Body of pancreas (tissue), 4 donors: ENCODE measurements at regions of chr20 and their contacts with region 1.

Region 1: DNA sequence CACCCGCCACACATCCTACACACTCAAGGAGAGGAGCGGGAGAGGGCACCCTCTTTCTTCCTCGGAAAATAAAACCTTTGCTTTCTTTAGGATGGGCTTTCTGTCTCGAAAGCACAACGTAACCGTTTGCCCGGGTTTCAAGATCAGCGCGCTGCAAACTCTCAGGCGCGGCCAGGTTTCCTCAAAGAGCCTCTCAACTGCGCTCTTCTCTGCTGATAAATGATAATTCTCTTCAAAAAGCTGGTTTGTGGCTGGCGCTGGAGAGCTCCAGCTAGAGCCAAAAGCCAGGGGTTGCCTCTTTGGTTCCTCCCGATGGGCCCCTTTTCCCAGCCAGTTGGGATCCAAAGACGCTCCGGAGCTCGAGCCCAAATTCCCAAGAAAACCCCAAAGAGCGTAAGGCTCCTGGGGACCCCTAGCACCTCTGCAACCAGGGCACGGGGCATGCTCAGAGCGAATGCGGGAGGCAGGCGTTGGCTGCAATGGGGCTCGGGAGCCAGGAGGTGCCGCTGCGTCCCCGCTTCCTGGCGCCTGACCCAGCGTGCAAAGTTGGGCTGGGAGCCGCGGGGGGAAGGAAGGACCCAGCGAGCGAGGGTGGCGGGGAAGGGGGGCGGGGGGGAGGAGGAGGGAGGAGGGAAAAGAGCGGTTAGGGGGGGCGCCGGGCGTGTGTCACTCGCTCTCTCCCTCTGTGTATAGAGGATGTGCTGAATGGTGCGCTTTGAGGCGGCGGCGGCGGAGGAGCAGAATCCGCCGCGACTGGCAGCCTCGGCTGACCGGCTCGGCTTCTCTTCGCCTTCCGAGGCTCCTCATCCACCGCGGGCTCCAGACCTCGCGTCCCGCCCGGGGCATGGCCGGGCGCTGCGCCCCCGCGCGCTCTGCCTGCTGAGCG is at the start of gene PLCB1:
- DNase-seq: peak; percentile 88 to 91 (median 88)
- ATAC-seq: peak; percentile 90
- H3K4me3 ChIP-seq: peak within 1 kb of the TSS; percentile 58 to 73
- H3K27ac ChIP-seq: peak within 1 kb of the TSS; percentile 74 to 87 (median 78)
- H3K4me1 ChIP-seq: peaks cover 5% of the 10 kb centered on the region
- H3K27me3 ChIP-seq: no peaks in the 10 kb centered on the region
- CTCF ChIP-seq: peak; percentile 83 to 96 (median 93)
- POLR2A ChIP-seq: no peak
- total RNA-seq, gene PLCB1: 32.9 to 46.1 TPM

Region 2: DNA sequence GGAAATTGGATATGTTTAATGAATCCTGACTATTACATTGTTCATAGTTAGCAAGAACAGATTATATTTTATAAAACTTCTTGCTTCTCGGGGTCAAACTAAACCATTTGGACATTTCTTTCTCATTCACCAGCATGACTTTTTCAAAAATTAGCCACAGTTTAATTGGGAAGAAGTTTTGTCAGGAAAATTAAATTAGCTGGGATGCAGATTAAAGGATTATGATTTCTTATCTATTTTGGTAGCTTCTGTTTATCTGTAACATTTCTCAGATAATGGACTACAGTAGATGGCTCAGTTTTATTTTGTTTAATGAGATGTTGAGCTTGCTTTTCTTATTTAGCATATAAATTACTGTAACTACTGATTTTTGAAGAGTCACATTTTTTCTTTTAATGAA is 85.9 kb before region 1 on chr20:
- intact Hi-C with region 1: no loop called
- DNase-seq: no peak
- ATAC-seq: no peak
- H3K4me3 ChIP-seq: no peak overlapping the region
- H3K27ac ChIP-seq: no peak overlapping the region
- H3K4me1 ChIP-seq: no peaks in the 10 kb centered on the region
- H3K27me3 ChIP-seq: no peaks in the 10 kb centered on the region
- CTCF ChIP-seq: no peak
- POLR2A ChIP-seq: no peak

Region 3: DNA sequence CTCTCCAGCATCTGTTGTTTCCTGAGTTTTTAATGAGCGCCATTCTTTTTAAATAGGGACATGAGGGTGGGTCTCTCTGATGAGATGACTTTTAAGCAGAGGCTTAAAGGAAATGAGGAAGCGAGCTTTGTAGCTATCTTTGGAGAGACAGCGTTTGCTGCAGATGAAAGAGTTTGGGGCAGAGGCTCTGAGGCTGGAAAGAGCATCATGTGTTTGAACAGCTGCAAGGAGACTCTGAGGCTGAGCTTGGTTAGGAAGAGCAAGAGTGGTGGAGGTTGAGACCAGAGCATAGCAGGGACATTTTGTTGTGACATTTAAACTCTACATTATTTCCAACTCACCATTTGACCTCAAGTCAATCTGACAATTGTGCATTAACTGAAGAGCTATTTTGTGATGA is 74.0 kb before region 1 on chr20:
- intact Hi-C with region 1: no loop called
- DNase-seq: no peak
- ATAC-seq: no peak
- H3K4me3 ChIP-seq: no peak overlapping the region
- H3K27ac ChIP-seq: no peak overlapping the region
- H3K4me1 ChIP-seq: no peaks in the 10 kb centered on the region
- H3K27me3 ChIP-seq: no peaks in the 10 kb centered on the region
- CTCF ChIP-seq: no peak
- POLR2A ChIP-seq: no peak

Region 4: DNA sequence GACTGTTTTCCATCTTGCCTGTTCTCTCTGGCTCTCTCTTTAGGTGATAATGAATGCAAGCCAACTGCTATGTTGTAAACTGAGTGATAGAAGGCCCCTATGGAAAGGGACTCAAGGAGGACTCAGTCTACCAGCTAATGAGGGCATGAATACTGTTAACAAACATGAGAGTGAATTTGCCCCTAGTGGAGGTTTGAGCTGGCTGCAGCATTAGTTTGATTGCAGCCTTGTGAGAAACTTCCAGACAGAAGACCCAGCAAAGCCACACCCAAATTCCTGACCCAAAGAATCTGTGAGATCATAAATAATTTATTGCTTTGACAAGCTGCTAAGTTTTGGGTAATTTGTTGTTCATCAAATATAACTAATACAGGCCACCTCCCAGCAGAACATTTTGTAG is 49.8 kb before region 1 on chr20:
- intact Hi-C with region 1: no loop called
- DNase-seq: no peak
- ATAC-seq: no peak
- H3K4me3 ChIP-seq: no peak overlapping the region
- H3K27ac ChIP-seq: no peak overlapping the region
- H3K4me1 ChIP-seq: no peaks in the 10 kb centered on the region
- H3K27me3 ChIP-seq: no peaks in the 10 kb centered on the region
- CTCF ChIP-seq: peak in 3 of 7 experiments; percentile 7 to 14 (median 14)
- POLR2A ChIP-seq: no peak

Region 5: DNA sequence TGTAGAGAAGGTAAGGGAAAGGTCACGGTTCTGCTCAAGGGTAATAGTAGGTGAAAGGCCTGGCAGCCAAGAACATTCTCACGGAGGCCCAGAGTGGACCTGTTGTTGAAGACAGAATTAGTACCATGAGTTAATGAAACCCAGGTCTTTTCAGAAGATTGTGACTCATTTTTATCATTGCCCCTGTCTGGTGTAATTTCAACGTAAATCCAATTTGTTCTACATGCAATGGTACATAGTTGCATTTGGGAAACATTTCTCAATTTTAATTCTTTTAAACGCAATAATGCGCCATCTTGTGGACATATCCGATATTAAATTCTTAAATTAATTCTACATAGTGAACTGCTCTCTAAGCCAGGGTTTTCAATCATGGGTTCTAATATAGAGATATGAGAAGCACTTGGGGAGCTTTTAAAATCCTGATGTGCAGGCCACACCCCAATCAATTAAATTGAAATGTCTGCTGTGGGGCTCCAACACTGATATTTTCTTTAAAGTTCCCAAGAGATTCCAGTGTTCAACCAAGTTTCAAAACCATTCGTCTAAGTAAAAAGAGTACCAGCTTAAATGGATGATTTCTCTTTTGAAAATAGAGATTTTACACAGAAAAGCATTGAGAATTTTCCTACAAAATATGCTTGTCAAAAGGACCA is 257.7 kb after region 1 on chr20:
- intact Hi-C with region 1: loop called (anchors 10 kb)
- DNase-seq: peak in 1 of 4 donors; percentile 18
- ATAC-seq: peak; percentile 40
- H3K4me3 ChIP-seq: no peak overlapping the region
- H3K27ac ChIP-seq: peak overlapping the region in 3 of 4 donors; percentile 2 to 32 (median 22)
- H3K4me1 ChIP-seq: peaks cover 54% of the 10 kb centered on the region
- H3K27me3 ChIP-seq: no peaks in the 10 kb centered on the region
- CTCF ChIP-seq: peak in 6 of 7 experiments; percentile 39 to 66 (median 56)
- POLR2A ChIP-seq: no peak

Region 6: GRCh38 chr20:8718279-8718678 is 586.4 kb after region 1 on chr20:
- intact Hi-C with region 1: loop called (anchors 10 kb)
- DNase-seq: peak in 1 of 4 donors; percentile 10
- ATAC-seq: no peak
- H3K4me3 ChIP-seq: no peak overlapping the region
- H3K27ac ChIP-seq: no peak overlapping the region
- H3K4me1 ChIP-seq: no peaks in the 10 kb centered on the region
- H3K27me3 ChIP-seq: no peaks in the 10 kb centered on the region
- CTCF ChIP-seq: no peak
- POLR2A ChIP-seq: no peak